ENCODE measurements at regions of chr11 and their contacts with region 1.

Region 1: GRCh38 chr11:114774599-114775361 is 96.5 kb downstream of the NXPE2 start:
- DNase-seq: peak; percentile 81
- ATAC-seq: peak; percentile 90
- H3K4me3 Mint-ChIP-seq: no peak overlapping the region
- H3K27ac Mint-ChIP-seq: no peak overlapping the region
- H3K4me1 Mint-ChIP-seq: peaks cover 27% of the 10 kb centered on the region
- H3K27me3 Mint-ChIP-seq: peaks cover 47% of the 10 kb centered on the region
- CTCF ChIP-seq: peak; percentile 96

Region 2: GRCh38 chr11:114764563-114764962 is 10.2 kb before region 1 on chr11:
- CTCF ChIA-PET with region 1: interaction called, 11 read pairs
- POLR2A ChIA-PET with region 1: no interaction called
- DNase-seq: no peak
- ATAC-seq: no peak
- H3K4me3 Mint-ChIP-seq: no peak overlapping the region
- H3K27ac Mint-ChIP-seq: no peak overlapping the region
- H3K4me1 Mint-ChIP-seq: no peaks in the 10 kb centered on the region
- H3K27me3 Mint-ChIP-seq: peaks cover 9% of the 10 kb centered on the region
- CTCF ChIP-seq: no peak

Region 3: DNA sequence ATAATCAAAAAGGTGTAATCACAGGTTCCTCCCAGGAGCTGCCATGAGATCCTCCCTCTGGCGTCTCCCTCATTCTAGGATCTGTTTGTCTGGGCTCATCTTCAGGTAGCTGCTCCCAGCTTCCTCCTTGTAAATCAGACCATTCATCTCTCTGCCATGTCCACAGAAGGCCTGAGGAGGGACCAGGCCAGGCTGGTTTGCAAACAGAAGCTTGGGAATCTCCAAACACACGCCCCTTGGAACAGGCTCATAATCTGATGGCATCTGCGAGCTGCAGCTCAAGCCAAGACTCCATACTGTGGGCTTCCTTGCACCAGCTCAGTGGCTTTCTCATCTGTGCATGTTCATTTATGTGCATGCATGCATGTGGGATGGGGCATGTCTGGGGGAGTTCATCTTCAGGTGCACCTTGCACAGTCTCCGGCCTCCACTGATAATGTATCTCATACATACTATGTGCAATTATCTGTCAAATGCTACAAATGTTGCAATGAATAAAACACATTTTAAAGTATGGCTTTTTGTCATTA is 38.5 kb after region 1 on chr11:
- CTCF ChIA-PET with region 1: interaction called, 12 read pairs
- POLR2A ChIA-PET with region 1: no interaction called
- DNase-seq: no peak
- ATAC-seq: no peak
- H3K4me3 Mint-ChIP-seq: no peak overlapping the region
- H3K27ac Mint-ChIP-seq: no peak overlapping the region
- H3K4me1 Mint-ChIP-seq: peaks cover 11% of the 10 kb centered on the region; the same call in 1 of the 2 replicates
- H3K27me3 Mint-ChIP-seq: no peaks in the 10 kb centered on the region
- CTCF ChIP-seq: no peak

Region 4: DNA sequence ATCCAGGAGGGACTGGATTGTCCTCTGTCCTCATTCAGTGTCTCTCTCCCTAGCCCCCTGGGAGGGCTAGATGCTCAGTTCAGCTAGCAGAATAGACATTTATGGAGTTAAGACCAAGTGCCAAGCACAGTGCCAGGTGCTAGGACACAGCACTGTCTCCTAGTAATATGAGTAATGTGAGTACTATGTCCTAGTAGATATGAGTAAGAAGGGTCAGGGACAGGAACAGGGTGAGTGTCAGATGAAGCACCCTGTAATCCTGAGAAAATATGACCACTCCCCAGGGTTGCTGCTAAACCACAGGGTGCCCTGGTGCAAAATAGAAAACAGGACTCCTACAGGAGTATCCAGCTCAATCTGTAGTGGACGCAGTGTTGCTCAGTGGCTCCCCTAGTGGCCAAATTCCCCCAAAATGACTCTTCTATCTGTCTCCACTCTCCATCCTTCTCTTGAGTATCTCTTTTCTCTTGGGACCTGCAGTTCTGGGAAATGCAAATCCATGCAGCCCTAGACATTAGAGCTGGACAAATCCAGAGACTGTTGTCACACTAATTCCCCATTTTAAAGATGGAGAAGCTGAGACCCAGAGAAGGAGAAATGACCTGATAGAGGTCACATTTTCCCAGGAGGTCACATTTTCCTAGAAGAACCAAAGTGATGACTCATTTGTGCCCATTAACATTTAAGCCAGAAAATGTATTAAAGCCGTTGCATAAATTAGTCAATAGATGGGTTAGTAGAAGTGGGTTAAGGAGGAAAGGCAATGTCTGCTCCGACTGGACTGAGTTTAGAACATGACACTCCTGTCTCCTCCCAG is 117.8 kb after region 1 on chr11:
- CTCF ChIA-PET with region 1: interaction called, 26 read pairs
- POLR2A ChIA-PET with region 1: no interaction called
- DNase-seq: peak; percentile 61
- ATAC-seq: peak; percentile 51
- H3K4me3 Mint-ChIP-seq: no peak overlapping the region
- H3K27ac Mint-ChIP-seq: no peak overlapping the region
- H3K4me1 Mint-ChIP-seq: peaks cover 23% of the 10 kb centered on the region
- H3K27me3 Mint-ChIP-seq: peaks cover 3% of the 10 kb centered on the region; the same call in 1 of the 2 replicates
- CTCF ChIP-seq: peak; percentile 84

Region 5: DNA sequence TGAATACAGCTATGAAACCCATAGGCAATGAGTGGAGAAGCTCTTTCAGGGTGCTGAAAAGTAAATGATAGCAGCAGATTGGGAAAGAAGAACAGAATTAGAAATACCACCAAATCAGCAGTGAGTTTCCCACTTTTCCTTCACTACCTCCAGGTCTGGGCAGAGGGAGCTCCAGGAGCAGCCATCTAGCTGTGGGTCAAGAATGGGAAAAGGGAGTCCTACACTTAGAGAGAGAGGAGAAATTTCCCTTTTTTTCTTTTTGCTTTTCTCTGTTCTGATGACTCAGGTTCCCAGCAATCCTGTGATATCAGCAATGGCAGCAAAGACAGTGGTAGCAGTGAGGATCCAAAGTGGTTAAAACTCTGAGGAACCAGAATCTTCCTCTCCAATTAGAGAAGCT is 167.4 kb after region 1 on chr11:
- CTCF ChIA-PET with region 1: interaction called, 11 read pairs
- POLR2A ChIA-PET with region 1: no interaction called
- DNase-seq: no peak
- ATAC-seq: peak; percentile 52
- H3K4me3 Mint-ChIP-seq: no peak overlapping the region
- H3K27ac Mint-ChIP-seq: no peak overlapping the region
- H3K4me1 Mint-ChIP-seq: peaks cover 5% of the 10 kb centered on the region; the same call in 1 of the 2 replicates
- H3K27me3 Mint-ChIP-seq: peaks cover 11% of the 10 kb centered on the region
- CTCF ChIP-seq: no peak

Region 6: GRCh38 chr11:115324581-115325432 is 550.0 kb after region 1 on chr11:
- CTCF ChIA-PET with region 1: interaction called, 11 read pairs
- POLR2A ChIA-PET with region 1: no interaction called
- DNase-seq: peak; percentile 13
- ATAC-seq: peak; percentile 87
- H3K4me3 Mint-ChIP-seq: no peak overlapping the region
- H3K27ac Mint-ChIP-seq: no peak overlapping the region
- H3K4me1 Mint-ChIP-seq: peaks cover 6% of the 10 kb centered on the region
- H3K27me3 Mint-ChIP-seq: no peaks in the 10 kb centered on the region
- CTCF ChIP-seq: peak; percentile 62; the same call in 1 of the 2 replicates